H1 (cell line): ENCODE measurements at regions of chr18 and their contacts with region 1.

Region 1: GRCh38 chr18:50218432-50219197 is 23.7 kb upstream of the MYO5B start:
- DNase-seq: peak in 1 of 2 experiments; percentile 60
- H3K4me3 ChIP-seq: no peak overlapping the region
- H3K27ac ChIP-seq: no peak overlapping the region
- H3K4me1 ChIP-seq: no peaks in the 10 kb centered on the region
- H3K27me3 ChIP-seq: no peaks in the 10 kb centered on the region
- CTCF ChIP-seq: peak; percentile 20 to 76 (median 69)
- EP300 ChIP-seq: no peak
- POLR2A ChIP-seq: no peak
- RAD21 ChIP-seq: peak; percentile 64 to 70

Region 2: GRCh38 chr18:50151926-50152325 is 66.7 kb before region 1 on chr18:
- CTCF ChIA-PET with region 1: no interaction called
- POLR2A ChIA-PET with region 1: no interaction called
- DNase-seq: no peak
- H3K4me3 ChIP-seq: no peak overlapping the region
- H3K27ac ChIP-seq: no peak overlapping the region
- H3K4me1 ChIP-seq: no peaks in the 10 kb centered on the region
- H3K27me3 ChIP-seq: no peaks in the 10 kb centered on the region
- CTCF ChIP-seq: no peak
- EP300 ChIP-seq: no peak
- POLR2A ChIP-seq: no peak
- RAD21 ChIP-seq: no peak

Region 3: GRCh38 chr18:50231621-50232020 is 13.0 kb after region 1 on chr18:
- CTCF ChIA-PET with region 1: interaction called, 13 read pairs
- POLR2A ChIA-PET with region 1: no interaction called
- DNase-seq: no peak
- H3K4me3 ChIP-seq: no peak overlapping the region
- H3K27ac ChIP-seq: no peak overlapping the region
- H3K4me1 ChIP-seq: peaks cover 0 to 4% (median 0%) of the 10 kb centered on the region in 4 experiments; a peak in 1 of 7 replicates
- H3K27me3 ChIP-seq: no peaks in the 10 kb centered on the region
- CTCF ChIP-seq: no peak
- EP300 ChIP-seq: no peak
- POLR2A ChIP-seq: no peak
- RAD21 ChIP-seq: no peak

Region 4: DNA sequence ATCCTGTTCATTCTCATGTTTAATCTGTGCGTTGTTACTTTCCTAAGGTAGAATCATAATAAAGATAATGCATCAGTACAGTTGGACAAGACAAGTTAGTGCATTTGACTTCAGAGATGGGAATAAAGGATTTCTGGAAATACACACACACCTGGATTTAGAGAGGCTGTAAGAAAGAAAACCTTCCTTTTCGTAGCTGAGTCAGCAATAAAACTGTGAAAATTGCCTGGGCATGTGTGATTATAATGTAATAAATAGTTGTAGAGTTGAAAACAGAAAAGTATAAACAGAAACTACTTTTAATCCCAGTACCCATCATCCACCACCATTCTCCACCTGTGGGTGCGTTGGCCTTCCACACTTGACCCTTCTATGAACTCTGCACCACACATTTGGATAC is 32.3 kb after region 1 on chr18:
- CTCF ChIA-PET with region 1: interaction called, 11 read pairs
- POLR2A ChIA-PET with region 1: no interaction called
- DNase-seq: no peak
- H3K4me3 ChIP-seq: no peak overlapping the region
- H3K27ac ChIP-seq: no peak overlapping the region
- H3K4me1 ChIP-seq: peaks cover 0 to 3% (median 0%) of the 10 kb centered on the region in 4 experiments; a peak in 1 of 7 replicates
- H3K27me3 ChIP-seq: no peaks in the 10 kb centered on the region
- CTCF ChIP-seq: no peak
- EP300 ChIP-seq: no peak
- POLR2A ChIP-seq: no peak
- RAD21 ChIP-seq: no peak

Region 5: GRCh38 chr18:50268022-50268747 is 49.6 kb after region 1 on chr18:
- CTCF ChIA-PET with region 1: interaction called, 17 read pairs
- POLR2A ChIA-PET with region 1: no interaction called
- DNase-seq: peak; percentile 75 to 94
- H3K4me3 ChIP-seq: peak overlapping the region; percentile 59 to 81 (median 68)
- H3K27ac ChIP-seq: no peak overlapping the region
- H3K4me1 ChIP-seq: peaks cover 0 to 7% (median 0%) of the 10 kb centered on the region in 4 experiments; a peak in 3 of 7 replicates
- H3K27me3 ChIP-seq: no peaks in the 10 kb centered on the region; a peak in 1 of 7 replicates
- CTCF ChIP-seq: peak; percentile 82 to 86 (median 83)
- EP300 ChIP-seq: no peak
- POLR2A ChIP-seq: peak in 1 of 2 experiments; percentile 56; a peak in 1 of 3 replicates
- RAD21 ChIP-seq: peak; percentile 54 to 73

Region 6: GRCh38 chr18:50429207-50429948 is 210.8 kb after region 1 on chr18:
- CTCF ChIA-PET with region 1: interaction called, 23 read pairs
- POLR2A ChIA-PET with region 1: no interaction called
- DNase-seq: no peak
- H3K4me3 ChIP-seq: no peak overlapping the region
- H3K27ac ChIP-seq: no peak overlapping the region
- H3K4me1 ChIP-seq: no peaks in the 10 kb centered on the region
- H3K27me3 ChIP-seq: no peaks in the 10 kb centered on the region
- CTCF ChIP-seq: peak in 2 of 3 experiments; percentile 5 to 21; a peak in 2 of 4 replicates
- EP300 ChIP-seq: no peak
- POLR2A ChIP-seq: no peak
- RAD21 ChIP-seq: peak; percentile 44 to 45; a peak in 3 of 4 replicates